A673 (cell line): ENCODE measurements at regions of chr17 and their contacts with region 1.

Region 1: GRCh38 chr17:68832109-68832802 is 122.9 kb downstream of the ABCA8 start:
- DNase-seq: peak; percentile 35
- H3K4me3 ChIP-seq: no peak overlapping the region
- H3K27ac ChIP-seq: peak overlapping the region; percentile 92
- H3K4me1 ChIP-seq: peaks cover 47% of the 10 kb centered on the region
- H3K27me3 ChIP-seq: no peaks in the 10 kb centered on the region
- CTCF ChIP-seq: no peak

Region 2: GRCh38 chr17:68777243-68777855 is 54.9 kb before region 1 on chr17:
- CTCF ChIA-PET with region 1: interaction called, 7 read pairs
- POLR2A ChIA-PET with region 1: no interaction called
- intact Hi-C with region 1: loop called (anchors 1 kb)
- DNase-seq: peak; percentile 97
- H3K4me3 ChIP-seq: no peak overlapping the region
- H3K27ac ChIP-seq: peak overlapping the region; percentile 92
- H3K4me1 ChIP-seq: peaks cover 51% of the 10 kb centered on the region
- H3K27me3 ChIP-seq: no peaks in the 10 kb centered on the region
- CTCF ChIP-seq: peak; percentile 83

Region 3: DNA sequence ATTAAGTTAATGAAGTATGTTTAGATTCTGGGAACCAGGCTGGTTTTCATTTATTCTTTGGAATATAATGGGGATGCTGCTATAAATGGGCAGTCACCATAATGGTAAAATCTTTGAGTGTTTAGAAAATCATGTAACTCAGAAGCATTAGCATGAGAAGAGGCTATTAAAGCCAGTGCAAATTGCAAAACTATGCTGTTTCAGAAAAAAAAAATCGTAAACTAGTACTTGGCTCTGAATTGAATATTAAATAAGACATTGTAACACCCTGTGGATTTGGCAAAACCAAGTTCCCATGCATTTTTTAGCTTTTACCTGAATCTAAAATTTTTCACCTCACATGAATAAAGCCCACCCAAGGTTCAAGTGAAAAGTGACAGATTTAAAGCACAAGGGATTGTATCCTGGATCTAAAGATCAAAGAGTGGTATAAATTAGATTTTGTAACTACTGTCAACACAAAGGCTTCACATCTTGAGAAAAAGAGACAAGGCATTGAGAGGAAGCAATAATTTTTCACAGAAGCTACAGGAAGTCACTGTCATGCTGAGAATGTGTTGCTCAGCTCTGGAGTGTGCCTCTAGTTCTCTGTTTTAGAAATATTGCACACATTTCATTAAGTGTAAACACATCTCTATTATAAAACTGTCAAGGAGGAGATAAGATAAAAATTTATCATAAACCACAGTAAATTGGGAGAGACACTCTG is 19.2 kb before region 1 on chr17:
- CTCF ChIA-PET with region 1: no interaction called
- POLR2A ChIA-PET with region 1: no interaction called
- intact Hi-C with region 1: loop called (anchors 1 kb)
- DNase-seq: peak; percentile 97
- H3K4me3 ChIP-seq: no peak overlapping the region
- H3K27ac ChIP-seq: peak overlapping the region; percentile 60
- H3K4me1 ChIP-seq: peaks cover 45% of the 10 kb centered on the region
- H3K27me3 ChIP-seq: no peaks in the 10 kb centered on the region
- CTCF ChIP-seq: no peak

Region 4: DNA sequence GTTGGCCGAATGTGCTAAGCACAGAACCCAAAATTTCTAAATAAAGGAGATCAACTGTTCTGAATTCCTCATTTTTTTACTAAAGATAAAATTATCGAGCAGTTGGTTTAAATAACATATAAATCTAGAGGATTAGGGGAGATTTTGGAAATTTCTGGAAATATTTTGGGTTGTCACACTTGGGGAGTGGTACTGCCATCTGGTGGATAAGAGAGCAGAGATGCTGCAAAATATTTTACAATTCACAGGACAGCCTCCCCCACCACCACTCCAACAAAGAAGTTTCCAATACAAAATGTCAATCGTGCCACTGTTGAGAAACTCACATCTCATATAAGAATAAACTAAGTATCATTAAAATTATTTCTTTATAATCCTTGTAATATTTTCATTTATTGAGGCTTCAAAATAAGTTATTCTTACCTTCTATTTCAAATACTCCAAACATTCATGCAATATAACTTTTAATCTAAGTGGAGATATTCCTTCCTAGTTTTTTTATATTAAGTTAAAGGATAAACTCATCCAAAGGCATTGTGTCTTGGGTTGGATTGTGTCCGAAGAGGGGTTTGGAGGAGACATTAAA is 140.0 kb after region 1 on chr17:
- CTCF ChIA-PET with region 1: no interaction called
- POLR2A ChIA-PET with region 1: no interaction called
- intact Hi-C with region 1: loop called (anchors 2 kb)
- DNase-seq: peak; percentile 75
- H3K4me3 ChIP-seq: no peak overlapping the region
- H3K27ac ChIP-seq: no peak overlapping the region
- H3K4me1 ChIP-seq: peaks cover 9% of the 10 kb centered on the region
- H3K27me3 ChIP-seq: no peaks in the 10 kb centered on the region
- CTCF ChIP-seq: peak; percentile 83

Region 5: DNA sequence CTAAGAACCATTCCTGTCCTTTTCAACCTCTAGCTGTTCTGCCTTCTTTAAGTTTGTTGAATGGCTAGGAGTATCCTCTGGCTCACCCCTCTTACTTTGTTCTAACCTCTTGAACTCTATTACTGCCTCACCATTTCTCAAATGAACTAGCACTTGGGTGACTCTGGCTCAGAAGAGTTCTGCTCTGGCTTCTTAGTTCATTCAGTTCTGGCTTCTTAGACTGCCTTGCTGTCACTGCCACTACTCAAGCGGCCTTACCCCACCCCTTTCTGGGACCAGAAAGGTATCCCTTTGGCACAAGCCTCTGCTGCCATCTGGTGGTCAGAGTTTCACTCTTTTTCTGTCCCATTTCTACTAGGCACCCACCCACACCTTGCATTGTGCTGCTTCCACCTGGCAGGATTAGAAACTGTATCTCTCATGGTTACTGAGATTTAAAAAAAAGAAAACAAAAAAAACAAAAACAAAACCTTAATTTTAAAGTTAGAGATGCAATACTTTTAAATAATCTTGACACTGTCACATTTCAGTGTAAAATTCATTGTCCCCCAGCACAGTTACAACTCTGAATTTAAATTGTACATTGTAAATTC is 403.2 kb after region 1 on chr17:
- CTCF ChIA-PET with region 1: no interaction called
- POLR2A ChIA-PET with region 1: no interaction called
- intact Hi-C with region 1: loop called (anchors 1 kb)
- DNase-seq: peak; percentile 94
- H3K4me3 ChIP-seq: no peak overlapping the region
- H3K27ac ChIP-seq: peak overlapping the region; percentile 39
- H3K4me1 ChIP-seq: peaks cover 16% of the 10 kb centered on the region
- H3K27me3 ChIP-seq: no peaks in the 10 kb centered on the region
- CTCF ChIP-seq: peak; percentile 84